Dorsolateral prefrontal cortex (tissue), 120 donors: ENCODE measurements at regions of chr5 and their contacts with region 1.

Region 1: GRCh38 chr5:172770675-172771438 is at the start of gene DUSP1:
- DNase-seq: peak; percentile 95 to 100 (median 99)
- H3K4me3 ChIP-seq: peak within 1 kb of the TSS; percentile 63 to 99 (median 92)
- H3K27ac ChIP-seq: peak within 1 kb of the TSS; percentile 93 to 100 (median 100)
- H3K27me3 ChIP-seq: no peaks in the 10 kb centered on the region
- CTCF ChIP-seq: peak in 52 of 56 donors; percentile 3 to 74 (median 46)
- total RNA-seq, gene DUSP1: 25.5 to 228 (median 63.6) TPM

Region 2: DNA sequence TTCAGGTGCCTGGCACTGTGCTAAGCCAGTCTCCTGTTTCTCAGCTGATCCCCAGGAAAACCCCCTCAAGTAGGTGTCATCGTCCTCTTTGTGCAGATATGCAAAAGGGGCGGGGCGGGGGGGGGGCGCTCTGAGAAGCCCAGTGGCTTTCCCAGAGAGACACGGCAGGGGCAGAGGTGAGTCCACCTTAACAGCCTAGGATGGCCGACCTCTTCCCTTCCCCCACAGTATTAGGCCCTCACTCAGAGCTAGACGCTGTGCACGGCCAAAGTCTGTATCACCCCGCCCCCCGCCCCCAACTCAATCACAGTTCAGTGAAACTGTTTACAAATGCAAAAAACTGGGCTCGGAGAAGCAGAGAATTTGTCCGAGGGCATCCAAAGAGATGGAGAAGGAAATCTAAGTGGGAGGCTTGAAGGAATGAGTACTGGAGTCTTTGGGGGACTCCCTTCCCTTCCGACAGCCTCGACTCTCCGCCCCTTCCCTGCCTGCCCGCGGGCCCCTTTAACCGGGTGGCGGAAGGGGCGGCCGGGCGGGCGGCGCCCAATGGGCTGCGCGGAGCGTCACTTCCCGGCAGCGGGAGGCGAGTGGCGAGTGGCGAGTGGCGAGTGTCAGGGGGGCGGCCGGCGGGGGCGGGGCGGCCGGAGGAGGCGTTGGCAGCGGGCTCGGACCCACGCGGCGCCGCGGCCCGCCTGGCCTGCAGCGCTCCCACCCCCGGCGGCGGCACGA is 63.0 kb after region 1 on chr5 and contains the start of gene ERGIC1:
- intact Hi-C with region 1: loop called (anchors 2 to 5 kb)
- DNase-seq: peak; percentile 73 to 95 (median 84)
- H3K4me3 ChIP-seq: peak within 1 kb of the TSS; percentile 69 to 94 (median 83)
- H3K27ac ChIP-seq: peak within 1 kb of the TSS; percentile 6 to 92 (median 80)
- H3K27me3 ChIP-seq: no peaks in the 10 kb centered on the region
- CTCF ChIP-seq: peak in 5 of 56 donors; percentile 11 to 25 (median 14)
- total RNA-seq, gene ERGIC1: 48.4 to 109 (median 68.1) TPM

Region 3: DNA sequence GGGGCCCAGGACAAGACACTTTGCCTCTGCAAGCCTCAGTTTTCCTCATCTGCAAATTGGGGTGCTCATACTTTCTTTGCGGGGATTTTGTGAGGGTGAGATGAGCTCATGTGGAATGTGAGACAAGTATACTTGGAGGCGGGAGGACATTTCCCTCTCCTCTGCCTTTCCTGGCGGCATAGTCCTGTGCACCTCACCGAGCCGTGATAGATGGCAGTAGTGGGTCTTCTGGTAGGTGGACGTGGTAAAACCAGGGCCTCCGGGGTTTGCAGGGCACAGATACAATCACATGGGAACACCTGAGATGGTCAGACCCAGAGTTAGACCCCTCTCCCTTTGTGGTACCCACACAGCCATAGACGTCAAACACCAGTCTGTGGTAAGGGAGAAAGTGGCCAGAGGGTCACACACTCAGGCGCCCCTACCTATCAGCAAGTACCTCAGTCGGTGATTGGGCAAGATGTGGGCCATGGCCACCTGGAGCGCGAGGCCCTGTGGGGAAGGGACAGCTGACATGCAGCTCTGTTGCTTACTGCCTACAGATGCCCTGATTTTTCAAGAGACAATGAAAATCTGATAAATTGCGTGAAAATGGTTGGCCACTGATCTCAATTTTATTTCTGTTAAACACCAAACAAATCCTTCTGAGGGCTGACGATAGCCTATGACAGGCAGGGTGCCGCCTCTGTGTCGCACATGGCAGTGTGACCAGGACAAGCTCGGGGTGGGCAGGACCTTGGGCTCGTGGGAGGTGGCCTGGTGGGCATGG is 73.1 kb after region 1 on chr5:
- intact Hi-C with region 1: no loop called
- DNase-seq: no peak
- H3K4me3 ChIP-seq: no peak overlapping the region
- H3K27ac ChIP-seq: peak overlapping the region in 1 of 59 donors; percentile 63
- H3K27me3 ChIP-seq: no peaks in the 10 kb centered on the region
- CTCF ChIP-seq: no peak

Region 4: DNA sequence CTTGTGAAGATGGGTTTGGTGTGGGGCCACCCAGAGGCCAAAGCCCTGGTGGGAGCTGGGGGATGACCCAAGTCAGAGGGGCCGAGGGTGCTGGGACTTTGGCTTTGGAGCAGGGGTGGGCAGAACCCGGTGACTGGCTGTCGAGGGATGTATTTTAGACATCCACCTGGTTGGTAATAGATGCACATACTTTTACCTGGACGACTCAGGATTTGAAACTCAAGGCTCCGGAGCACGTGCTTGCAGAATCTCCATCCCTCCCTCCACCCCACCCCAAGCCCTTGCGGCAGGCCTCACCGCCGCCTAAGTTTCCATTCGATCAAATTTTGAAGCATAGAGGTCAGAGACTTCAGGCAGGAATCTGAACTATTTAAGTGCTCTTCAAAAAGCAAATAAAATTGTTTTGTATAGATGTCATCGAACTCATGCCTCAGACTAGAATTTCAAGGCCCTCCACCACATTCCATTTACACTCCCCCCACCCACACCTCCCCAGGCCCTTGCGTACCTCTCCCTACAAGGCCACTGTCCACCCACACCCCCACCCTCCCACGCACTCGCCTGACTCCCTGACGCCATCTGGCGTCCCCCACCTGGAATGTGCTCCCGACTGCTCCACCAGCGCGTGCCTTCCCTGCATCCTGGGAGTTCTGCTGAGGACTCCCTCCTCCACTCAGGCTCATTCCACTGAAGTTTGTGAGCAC is 131.8 kb after region 1 on chr5:
- intact Hi-C with region 1: loop called in 1 of 2 experiments (anchors 10 kb)
- DNase-seq: peak in 7 of 10 donors; percentile 36 to 71 (median 61)
- H3K4me3 ChIP-seq: no peak overlapping the region
- H3K27ac ChIP-seq: peak overlapping the region in 39 of 59 donors; percentile 7 to 91 (median 48)
- H3K27me3 ChIP-seq: no peaks in the 10 kb centered on the region
- CTCF ChIP-seq: peak in 47 of 56 donors; percentile 11 to 64 (median 37)

Region 5: DNA sequence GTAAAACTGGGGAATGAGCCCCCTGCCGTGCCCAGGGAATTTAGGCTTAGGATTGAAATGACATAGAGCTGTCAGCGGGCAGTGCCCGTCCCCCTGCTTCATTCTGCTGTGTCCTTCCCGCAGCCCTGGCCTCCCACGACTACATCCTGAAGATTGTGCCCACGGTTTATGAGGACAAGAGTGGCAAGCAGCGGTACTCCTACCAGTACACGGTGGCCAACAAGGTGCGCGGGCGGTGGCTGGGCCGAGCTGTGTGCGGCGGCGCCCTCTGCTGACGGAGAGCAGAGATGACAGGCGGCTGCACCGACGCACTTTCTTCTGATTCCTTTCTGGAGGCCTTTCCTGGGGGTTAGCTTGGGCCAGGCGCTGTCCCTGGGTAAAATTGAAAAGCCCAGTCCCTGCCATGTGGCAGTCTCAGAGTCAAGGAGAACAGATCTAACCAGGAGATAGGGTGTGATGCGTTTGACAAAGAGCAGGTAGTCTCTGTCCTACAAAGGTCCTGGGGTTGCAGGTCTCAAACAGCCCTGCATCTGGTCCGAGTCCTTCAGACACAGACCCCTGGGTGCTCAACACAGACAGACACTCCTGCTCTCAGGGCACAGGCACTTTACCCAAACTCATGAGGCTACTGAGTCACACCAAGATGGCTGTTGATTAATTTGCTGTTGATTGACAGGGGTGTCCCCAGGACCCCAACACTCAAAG is 161.6 kb after region 1 on chr5:
- intact Hi-C with region 1: loop called (anchors 1 to 2 kb)
- DNase-seq: peak; percentile 61 to 85 (median 76)
- H3K4me3 ChIP-seq: peak overlapping the region in 3 of 59 donors; percentile 9 to 14 (median 10)
- H3K27ac ChIP-seq: peak overlapping the region in 47 of 59 donors; percentile 10 to 85 (median 57)
- H3K27me3 ChIP-seq: no peaks in the 10 kb centered on the region
- CTCF ChIP-seq: peak; percentile 90 to 99 (median 98)